Colonic mucosa (tissue), 4 donors: ENCODE measurements at regions of chr11 and their contacts with region 1.

Region 1: GRCh38 chr11:33373636-33374035 is 116.5 kb downstream of the HIPK3 start:
- DNase-seq: no peak
- H3K4me3 ChIP-seq: no peak overlapping the region
- H3K27ac ChIP-seq: no peak overlapping the region
- H3K4me1 ChIP-seq: no peaks in the 10 kb centered on the region
- H3K27me3 ChIP-seq: peaks cover 27% of the 10 kb centered on the region
- CTCF ChIP-seq: no peak

Region 2: DNA sequence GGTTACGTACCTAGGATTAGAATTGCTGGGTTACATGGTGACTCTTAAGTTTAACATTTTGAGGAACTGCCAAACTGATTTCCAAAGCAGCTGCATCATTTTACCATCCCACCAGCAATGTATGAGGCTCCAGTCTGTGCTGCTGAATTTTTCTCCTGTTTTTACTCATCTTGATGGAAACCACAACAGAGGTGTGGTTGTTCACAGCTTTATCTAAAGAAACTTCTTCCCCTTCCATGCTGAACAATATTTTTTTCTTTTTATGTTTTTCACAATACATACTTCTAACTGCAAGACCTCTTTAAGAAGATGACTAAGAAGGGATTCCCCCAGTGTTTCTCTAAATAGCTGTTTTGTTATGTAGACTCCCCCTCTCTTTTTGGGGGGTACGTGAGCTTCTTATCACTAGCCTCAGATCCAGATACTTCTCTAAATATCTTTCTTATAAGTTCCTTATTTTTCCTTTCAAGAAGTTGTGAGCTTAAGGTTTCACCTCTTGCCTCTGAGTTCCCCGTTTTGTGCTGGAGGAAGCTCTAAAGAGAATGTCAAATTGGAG is 310.2 kb before region 1 on chr11:
- intact Hi-C with region 1: no loop called
- DNase-seq: no peak
- H3K4me3 ChIP-seq: no peak overlapping the region
- H3K27ac ChIP-seq: no peak overlapping the region
- H3K4me1 ChIP-seq: peaks cover 7% of the 10 kb centered on the region
- H3K27me3 ChIP-seq: no peaks in the 10 kb centered on the region
- CTCF ChIP-seq: no peak

Region 3: DNA sequence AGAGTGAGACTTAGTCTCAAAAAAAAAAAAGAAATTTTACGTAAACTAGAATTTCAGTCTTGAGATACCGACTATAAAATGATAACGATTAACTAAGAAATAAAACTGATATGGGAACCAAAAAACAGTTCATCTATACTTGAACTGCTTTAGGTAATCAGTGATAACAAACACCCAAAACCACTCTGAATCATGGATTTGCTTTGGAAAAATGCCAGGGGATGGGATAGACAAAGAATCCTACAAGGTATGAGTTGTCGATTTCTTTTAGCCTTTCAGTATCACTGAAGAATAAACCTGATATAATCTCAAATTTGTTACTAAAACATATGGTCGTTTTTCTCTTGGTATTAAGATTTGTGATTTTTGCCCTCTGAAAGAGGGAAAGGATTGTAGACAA is 226.1 kb before region 1 on chr11:
- intact Hi-C with region 1: no loop called
- DNase-seq: no peak
- H3K4me3 ChIP-seq: no peak overlapping the region
- H3K27ac ChIP-seq: no peak overlapping the region
- H3K4me1 ChIP-seq: no peaks in the 10 kb centered on the region
- H3K27me3 ChIP-seq: no peaks in the 10 kb centered on the region
- CTCF ChIP-seq: no peak

Region 4: DNA sequence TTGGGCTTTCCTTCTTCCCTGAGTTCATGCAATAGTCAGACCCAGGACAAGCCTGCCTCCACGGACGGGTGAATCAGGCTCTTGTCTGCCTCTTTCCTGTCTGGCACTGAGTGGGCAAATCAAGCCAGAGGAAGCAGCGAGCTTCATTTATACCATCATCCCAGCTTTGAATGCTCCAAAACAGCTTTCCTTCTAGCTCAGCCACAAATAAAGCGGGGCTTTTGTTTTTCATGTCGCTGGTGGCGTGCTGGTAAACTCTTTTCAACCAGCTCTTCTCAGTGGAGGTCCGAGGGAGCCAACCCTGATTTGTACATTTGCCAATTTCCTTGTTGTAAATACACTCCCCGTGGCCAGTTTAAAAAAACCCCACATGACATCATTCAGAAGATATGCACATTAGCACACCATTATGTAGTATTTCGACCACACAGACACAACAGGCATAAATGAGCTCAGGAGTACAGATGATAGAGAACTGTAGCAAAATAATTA is 318.4 kb after region 1 on chr11:
- intact Hi-C with region 1: no loop called
- DNase-seq: peak; percentile 76
- H3K4me3 ChIP-seq: no peak overlapping the region
- H3K27ac ChIP-seq: peak overlapping the region; percentile 84
- H3K4me1 ChIP-seq: peaks cover 15% of the 10 kb centered on the region
- H3K27me3 ChIP-seq: no peaks in the 10 kb centered on the region
- CTCF ChIP-seq: no peak

Region 5: GRCh38 chr11:33736148-33736809 is 362.6 kb after region 1 on chr11 and contains the start of gene CD59:
- intact Hi-C with region 1: loop called (anchors 5 kb)
- DNase-seq: peak; percentile 98
- H3K4me3 ChIP-seq: peak within 1 kb of the TSS; percentile 90
- H3K27ac ChIP-seq: peak within 1 kb of the TSS; percentile 93
- H3K4me1 ChIP-seq: peaks cover 9% of the 10 kb centered on the region
- H3K27me3 ChIP-seq: no peaks in the 10 kb centered on the region
- CTCF ChIP-seq: no peak
- total RNA-seq, gene CD59: 268 to 399 TPM